ENCODE measurements at regions of chr6 and their contacts with region 1.

Region 1: DNA sequence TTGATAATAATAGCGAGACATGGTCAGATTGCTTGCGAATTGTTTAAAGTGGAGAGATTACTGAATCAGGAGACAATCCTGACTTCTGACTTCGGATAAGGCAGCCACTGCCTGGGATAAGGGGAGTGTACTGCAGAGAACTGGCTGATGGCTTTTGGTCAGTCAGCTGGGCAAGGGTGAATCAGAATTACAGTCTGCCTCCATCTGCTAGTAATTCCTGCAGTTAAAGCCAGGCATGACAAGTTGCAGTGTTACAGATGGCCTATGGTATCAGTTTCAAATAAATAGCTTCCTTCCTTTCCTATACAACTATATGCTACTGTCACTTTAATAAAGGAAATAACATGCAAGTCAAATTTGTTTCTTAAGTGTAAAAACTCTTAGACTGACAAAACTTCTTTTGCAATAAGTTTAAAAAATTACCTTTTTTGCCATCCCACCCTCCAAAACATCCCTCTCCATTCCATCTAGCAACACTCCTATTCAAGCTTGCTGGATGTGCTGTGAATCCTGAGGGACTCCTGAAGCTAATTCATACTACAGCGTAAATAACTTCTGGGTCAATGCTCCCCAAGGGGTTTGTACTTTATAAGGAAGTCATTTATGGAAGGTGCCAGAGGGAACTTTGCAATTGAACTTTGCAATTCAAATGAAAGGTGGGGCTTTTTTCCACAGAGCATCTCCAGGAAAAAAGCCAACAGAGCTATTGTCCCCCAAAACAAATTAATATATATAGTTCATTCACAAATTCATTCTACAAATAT is 245.2 kb downstream of the ADGRB3 start:
- DNase-seq: no peak
- ATAC-seq: peak; percentile 54
- H3K4me3 ChIP-seq: no peak overlapping the region
- H3K27ac ChIP-seq: no peak overlapping the region
- H3K4me1 ChIP-seq: no peaks in the 10 kb centered on the region
- H3K27me3 ChIP-seq: no peaks in the 10 kb centered on the region

Region 2: DNA sequence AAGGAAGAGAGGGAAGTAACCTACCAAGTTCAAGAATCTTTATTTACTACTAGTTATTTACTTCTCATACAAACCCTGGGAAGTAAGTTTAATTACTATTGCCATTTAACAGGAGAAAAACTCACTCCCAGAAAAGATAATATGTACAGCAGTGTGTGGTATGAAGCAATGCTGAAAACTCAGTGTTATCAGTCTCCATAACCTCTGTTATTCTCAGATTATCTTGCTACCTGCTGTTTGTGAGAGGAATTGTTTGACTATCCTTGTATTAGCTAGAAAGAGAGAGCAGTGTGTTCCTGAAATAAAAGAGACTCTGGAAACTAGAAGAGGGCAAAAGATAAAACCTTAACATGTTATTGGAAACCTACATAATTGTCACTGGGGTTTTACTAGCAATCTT is 207.0 kb before region 1 on chr6:
- intact Hi-C with region 1: loop called in 1 of 2 experiments (anchors 5 kb)
- DNase-seq: no peak
- ATAC-seq: no peak
- H3K4me3 ChIP-seq: no peak overlapping the region
- H3K27ac ChIP-seq: no peak overlapping the region
- H3K4me1 ChIP-seq: no peaks in the 10 kb centered on the region
- H3K27me3 ChIP-seq: no peaks in the 10 kb centered on the region